ENCODE measurements at regions of chr13 and their contacts with region 1.

Region 1: DNA sequence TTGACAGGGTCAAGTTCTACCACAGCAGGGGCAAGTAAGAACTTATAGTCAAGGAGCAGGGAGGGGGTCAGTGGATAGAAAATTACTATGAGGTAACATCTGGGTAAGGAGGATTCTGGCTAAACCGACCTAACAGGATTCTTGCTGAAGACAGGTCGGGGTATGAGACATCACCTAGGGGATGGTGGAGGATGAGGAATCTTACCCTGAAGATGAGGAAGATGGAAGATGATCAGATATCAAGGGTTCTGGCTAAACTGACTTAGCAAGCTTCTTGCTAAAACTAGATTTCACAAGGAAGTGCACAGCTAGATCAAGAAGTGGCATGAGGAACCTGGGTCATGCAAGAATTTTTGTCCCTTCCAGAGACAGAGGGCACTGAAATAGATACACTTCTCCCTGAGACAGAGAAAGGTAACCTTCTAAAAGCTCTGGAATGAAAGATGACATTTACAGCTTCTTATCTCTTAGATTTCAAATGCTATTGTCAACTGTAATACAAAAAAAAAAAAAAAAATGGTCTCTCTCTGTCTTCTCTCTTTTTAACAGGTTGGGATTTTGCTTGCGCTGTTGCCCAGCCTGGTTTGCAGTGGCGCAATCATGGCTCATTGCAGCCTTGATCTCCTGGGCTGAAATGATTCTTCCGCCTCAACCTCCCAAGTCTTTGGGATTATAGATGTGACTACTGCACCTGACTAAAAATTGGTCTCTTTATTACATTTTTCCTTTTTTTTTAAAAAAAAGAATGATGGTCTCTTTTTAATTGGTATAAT is 9.6 kb upstream of the METTL21C start:
- DNase-seq: no peak
- H3K4me3 ChIP-seq: no peak overlapping the region
- H3K27ac ChIP-seq: no peak overlapping the region
- H3K4me1 ChIP-seq: no peaks in the 10 kb centered on the region
- H3K27me3 ChIP-seq: no peaks in the 10 kb centered on the region
- CTCF ChIP-seq: no peak
- POLR2A ChIP-seq: no peak

Region 2: GRCh38 chr13:101317986-101318523 is 1386.4 kb before region 1 on chr13:
- intact Hi-C with region 1: no loop called
- DNase-seq: no peak
- H3K4me3 ChIP-seq: no peak overlapping the region
- H3K27ac ChIP-seq: no peak overlapping the region
- H3K4me1 ChIP-seq: no peaks in the 10 kb centered on the region
- H3K27me3 ChIP-seq: no peaks in the 10 kb centered on the region
- CTCF ChIP-seq: no peak
- POLR2A ChIP-seq: no peak

Region 3: GRCh38 chr13:102693781-102694180 is 10.7 kb before region 1 on chr13:
- intact Hi-C with region 1: loop called (anchors 1 kb)
- DNase-seq: no peak
- H3K4me3 ChIP-seq: no peak overlapping the region
- H3K27ac ChIP-seq: no peak overlapping the region
- H3K4me1 ChIP-seq: no peaks in the 10 kb centered on the region
- H3K27me3 ChIP-seq: peaks cover 0 to 7% of the 10 kb centered on the region in 2 donors
- CTCF ChIP-seq: no peak
- POLR2A ChIP-seq: no peak

Region 4: GRCh38 chr13:102729560-102730270 is 25.2 kb after region 1 on chr13:
- intact Hi-C with region 1: no loop called
- DNase-seq: no peak
- H3K4me3 ChIP-seq: no peak overlapping the region
- H3K27ac ChIP-seq: peak overlapping the region in 1 of 2 donors; percentile 28
- H3K4me1 ChIP-seq: no peaks in the 10 kb centered on the region
- H3K27me3 ChIP-seq: no peaks in the 10 kb centered on the region
- CTCF ChIP-seq: no peak
- POLR2A ChIP-seq: no peak

Region 5: GRCh38 chr13:102773441-102774215 is 69.2 kb after region 1 on chr13 and contains the start of gene TEX30:
- intact Hi-C with region 1: no loop called
- DNase-seq: peak; percentile 59 to 71
- H3K4me3 ChIP-seq: peak within 1 kb of the TSS; percentile 65 to 76 (median 74)
- H3K27ac ChIP-seq: peak within 1 kb of the TSS; percentile 87 to 93
- H3K4me1 ChIP-seq: no peaks in the 10 kb centered on the region
- H3K27me3 ChIP-seq: no peaks in the 10 kb centered on the region
- CTCF ChIP-seq: peak in 1 of 3 donors; percentile 11
- POLR2A ChIP-seq: peak; percentile 51
- total RNA-seq, gene TEX30: 8.3 to 11.8 (median 9.3) TPM

Measured in breast epithelium (tissue), 4 donors.